ENCODE measurements at regions of chr7 and their contacts with region 1.

Region 1: GRCh38 chr7:155344600-155345433 is 47.1 kb downstream of the INSIG1 start:
- DNase-seq: peak; percentile 86
- H3K4me3 Mint-ChIP-seq: peak overlapping the region; percentile 43
- H3K27ac Mint-ChIP-seq: no peak overlapping the region
- H3K4me1 Mint-ChIP-seq: no peaks in the 10 kb centered on the region
- H3K27me3 Mint-ChIP-seq: peaks cover 39% of the 10 kb centered on the region
- CTCF ChIP-seq: peak; percentile 92

Region 2: DNA sequence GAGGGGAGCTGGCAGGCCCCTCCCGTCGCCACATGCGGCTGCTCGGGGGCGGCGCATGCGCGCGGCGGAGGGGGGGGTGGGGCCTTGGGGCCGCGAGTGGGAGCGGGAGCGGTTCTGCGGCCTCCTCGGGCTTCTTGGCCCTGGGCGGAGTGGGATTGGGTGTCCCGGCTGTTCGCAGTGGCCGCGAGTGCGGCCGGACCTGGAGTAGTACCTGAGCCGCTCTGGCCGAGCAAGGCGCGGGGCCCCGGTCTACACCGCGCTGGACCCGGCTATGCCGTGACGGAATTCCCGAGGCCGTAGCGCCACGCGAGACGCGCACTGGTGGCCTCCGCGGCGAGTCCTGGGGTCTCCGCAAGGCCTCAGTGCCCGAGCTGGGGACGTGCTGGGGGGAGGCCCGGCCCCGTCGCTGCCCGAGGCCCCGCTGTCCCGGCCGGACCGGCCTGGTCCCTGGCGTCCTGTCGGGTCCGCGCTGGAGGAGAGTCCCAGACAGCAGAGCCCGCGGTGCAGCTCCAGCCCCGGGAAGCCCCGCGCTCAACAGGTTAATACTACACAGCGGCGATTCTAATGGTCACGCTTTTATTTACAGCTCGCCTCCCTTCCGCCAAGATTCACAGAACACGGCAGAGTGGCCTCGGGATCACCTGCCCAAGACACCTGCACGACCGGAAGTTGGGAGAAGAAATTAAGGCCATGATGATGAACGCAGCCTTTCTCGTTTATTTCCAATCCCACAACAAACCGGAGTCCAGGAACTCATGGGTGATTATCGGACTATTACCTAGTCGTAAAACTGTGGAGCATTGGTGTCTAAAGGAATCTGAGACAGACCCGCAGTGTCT is 341.2 kb before region 1 on chr7:
- CTCF ChIA-PET with region 1: interaction called, 3 read pairs
- intact Hi-C with region 1: loop called (anchors 5 kb)
- DNase-seq: peak; percentile 83
- H3K4me3 Mint-ChIP-seq: peak overlapping the region; percentile 78
- H3K27ac Mint-ChIP-seq: peak overlapping the region; percentile 88
- H3K4me1 Mint-ChIP-seq: no peaks in the 10 kb centered on the region
- H3K27me3 Mint-ChIP-seq: no peaks in the 10 kb centered on the region
- CTCF ChIP-seq: no peak

Region 3: DNA sequence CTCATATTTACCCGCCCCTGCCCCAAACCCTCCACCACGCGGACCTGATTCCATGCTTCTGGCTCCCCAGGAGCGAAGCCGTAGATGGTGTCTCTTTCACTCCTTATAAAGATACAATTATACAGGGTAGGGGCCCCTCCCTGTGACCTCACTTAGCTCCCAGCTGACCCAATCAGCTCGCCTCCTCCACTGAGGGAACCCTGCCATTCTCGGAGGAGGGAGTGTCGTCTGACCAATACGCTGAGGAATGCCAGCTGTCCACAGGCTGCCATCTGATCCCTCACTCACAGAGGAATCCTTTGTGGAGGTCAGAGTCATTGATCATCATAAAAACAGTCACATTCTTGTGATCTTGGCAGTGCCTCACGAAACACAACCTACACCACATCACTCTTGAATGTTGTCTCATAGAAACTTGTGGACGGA is 114.6 kb before region 1 on chr7:
- CTCF ChIA-PET with region 1: no interaction called
- intact Hi-C with region 1: loop called (anchors 5 kb)
- DNase-seq: peak; percentile 91
- H3K4me3 Mint-ChIP-seq: peak overlapping the region; percentile 15
- H3K27ac Mint-ChIP-seq: peak overlapping the region; percentile 93
- H3K4me1 Mint-ChIP-seq: peaks cover 38% of the 10 kb centered on the region
- H3K27me3 Mint-ChIP-seq: no peaks in the 10 kb centered on the region
- CTCF ChIP-seq: no peak

Region 4: GRCh38 chr7:155584763-155585531 is 240.1 kb after region 1 on chr7:
- CTCF ChIA-PET with region 1: no interaction called
- intact Hi-C with region 1: no loop called
- DNase-seq: no peak
- H3K4me3 Mint-ChIP-seq: no peak overlapping the region
- H3K27ac Mint-ChIP-seq: no peak overlapping the region
- H3K4me1 Mint-ChIP-seq: peaks cover 8% of the 10 kb centered on the region
- H3K27me3 Mint-ChIP-seq: peaks cover 82% of the 10 kb centered on the region
- CTCF ChIP-seq: no peak

Measured in Calu3 (cell line).